B cell (primary cell): ENCODE measurements at regions of chr5 and their contacts with region 1.

Region 1: DNA sequence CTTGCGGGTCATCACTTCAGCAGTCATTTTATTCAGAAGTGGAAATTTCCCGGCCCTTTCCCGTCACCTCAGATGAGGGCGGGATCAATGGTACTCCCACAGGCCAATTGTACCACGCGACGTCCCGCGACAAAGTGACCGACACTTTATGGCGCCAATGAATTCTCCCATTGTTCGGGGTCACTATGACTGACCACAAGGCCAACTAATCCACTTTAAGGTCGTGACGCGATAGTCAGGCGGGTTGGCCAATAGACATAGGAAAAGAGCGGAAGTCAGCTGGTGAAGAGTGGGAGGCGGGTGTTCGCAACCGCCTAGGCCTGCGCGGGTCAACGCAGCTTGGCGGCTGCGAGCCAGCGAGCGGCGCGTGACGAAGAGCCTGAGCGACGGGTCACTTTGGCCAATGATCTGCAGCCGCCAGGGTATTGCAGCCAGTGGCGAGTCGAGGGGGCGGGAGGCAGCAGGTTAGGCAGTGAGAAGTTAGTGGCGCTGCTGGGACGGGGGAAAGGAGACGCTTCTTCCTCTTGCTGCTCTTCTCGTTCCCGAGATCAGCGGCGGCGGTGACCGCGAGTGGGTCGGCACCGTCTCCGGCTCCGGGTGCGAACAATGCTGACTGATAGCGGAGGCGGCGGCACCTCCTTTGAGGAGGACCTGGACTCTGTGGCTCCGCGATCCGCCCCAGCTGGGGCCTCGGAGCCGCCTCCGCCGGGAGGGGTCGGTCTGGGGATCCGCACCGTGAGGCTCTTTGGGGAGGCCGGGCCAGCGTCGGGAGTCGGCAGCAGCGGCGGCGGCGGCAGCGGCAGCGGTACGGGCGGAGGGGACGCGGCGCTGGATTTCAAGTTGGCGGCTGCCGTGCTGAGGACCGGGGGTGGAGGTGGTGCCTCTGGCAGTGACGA is at the start of gene ANKHD1:
- DNase-seq: peak; percentile 100
- ATAC-seq: peak; percentile 77
- H3K4me3 ChIP-seq: peak within 1 kb of the TSS; percentile 80 to 98 (median 92)
- H3K4me3 Mint-ChIP-seq: no peak within 1 kb of the TSS
- H3K27ac ChIP-seq: peak within 1 kb of the TSS; percentile 84 to 91
- H3K27ac Mint-ChIP-seq: no peak within 1 kb of the TSS
- H3K4me1 ChIP-seq: peaks cover 31% of the 10 kb centered on the region in 2 donors
- H3K4me1 Mint-ChIP-seq: peaks cover 31% of the 10 kb centered on the region
- H3K27me3 ChIP-seq: no peaks in the 10 kb centered on the region
- H3K27me3 Mint-ChIP-seq: no peaks in the 10 kb centered on the region
- CTCF ChIP-seq: no peak
- total RNA-seq, gene ANKHD1: 244 and 246 TPM in 2 replicates

Region 2: GRCh38 chr5:140174465-140175366 is 226.9 kb before region 1 on chr5 and contains the start of gene CYSTM1:
- CTCF ChIA-PET with region 1: no interaction called
- POLR2A ChIA-PET with region 1: interaction called, 5 read pairs
- intact Hi-C with region 1: loop called (anchors 1 kb)
- DNase-seq: peak; percentile 99
- ATAC-seq: peak; percentile 86
- H3K4me3 ChIP-seq: peak within 1 kb of the TSS; percentile 58 to 95 (median 94)
- H3K4me3 Mint-ChIP-seq: peak within 1 kb of the TSS; percentile 94
- H3K27ac ChIP-seq: peak within 1 kb of the TSS; percentile 84 to 98
- H3K27ac Mint-ChIP-seq: peak within 1 kb of the TSS; percentile 94
- H3K4me1 ChIP-seq: peaks cover 9 to 16% of the 10 kb centered on the region in 2 donors
- H3K4me1 Mint-ChIP-seq: peaks cover 15% of the 10 kb centered on the region
- H3K27me3 ChIP-seq: peaks cover 0 to 7% (median 0%) of the 10 kb centered on the region in 4 experiments
- H3K27me3 Mint-ChIP-seq: no peaks in the 10 kb centered on the region
- CTCF ChIP-seq: no peak
- total RNA-seq, gene CYSTM1: 17.0 and 18.7 TPM in 2 replicates

Region 3: DNA sequence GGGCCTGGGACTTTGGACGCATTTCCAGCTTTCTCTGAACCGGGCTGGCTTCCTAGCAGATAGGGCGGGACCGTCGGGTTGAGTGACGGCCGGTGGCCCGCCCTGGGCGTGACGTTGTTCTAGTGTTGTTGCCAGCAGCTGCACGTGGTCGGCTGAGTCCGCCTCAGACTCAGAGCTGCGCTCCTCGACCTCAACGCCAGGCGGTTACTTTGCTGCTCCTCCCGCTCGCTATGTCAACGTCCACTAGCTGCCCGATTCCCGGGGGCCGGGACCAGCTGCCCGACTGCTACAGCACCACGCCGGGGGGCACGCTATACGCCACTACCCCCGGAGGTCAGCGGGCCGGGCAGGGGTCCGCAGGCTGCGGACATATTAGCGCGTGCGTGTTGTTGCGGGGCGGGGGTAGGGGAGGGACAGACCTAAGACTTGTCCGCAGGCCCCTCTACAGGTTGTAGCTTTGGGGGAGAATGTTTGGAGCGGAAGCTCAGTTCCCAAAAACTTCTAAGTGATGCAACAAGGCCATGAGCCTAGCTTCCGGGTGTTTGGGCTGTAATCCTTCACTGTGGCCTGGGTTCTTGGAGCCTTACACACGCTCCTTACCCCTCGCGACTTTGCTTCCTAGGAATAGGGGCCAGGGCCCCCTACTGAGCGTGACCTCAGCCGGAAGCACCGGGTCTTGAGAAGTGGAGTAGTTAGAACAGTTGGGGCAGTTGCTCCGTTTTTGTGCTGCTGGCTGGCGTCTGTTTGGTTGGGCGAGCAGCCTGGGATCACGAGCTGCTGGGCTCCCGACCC is 146.1 kb after region 1 on chr5 and contains the start of gene EIF4EBP3:
- CTCF ChIA-PET with region 1: no interaction called
- POLR2A ChIA-PET with region 1: interaction called, 10 read pairs
- intact Hi-C with region 1: loop called (anchors 1 kb)
- DNase-seq: peak; percentile 91
- ATAC-seq: peak; percentile 97
- H3K4me3 ChIP-seq: peak within 1 kb of the TSS; percentile 35 to 93 (median 79)
- H3K4me3 Mint-ChIP-seq: peak within 1 kb of the TSS; percentile 94
- H3K27ac ChIP-seq: peak within 1 kb of the TSS; percentile 81 to 85
- H3K27ac Mint-ChIP-seq: peak within 1 kb of the TSS; percentile 94
- H3K4me1 ChIP-seq: peaks cover 10 to 30% of the 10 kb centered on the region in 2 donors
- H3K4me1 Mint-ChIP-seq: peaks cover 30% of the 10 kb centered on the region
- H3K27me3 ChIP-seq: no peaks in the 10 kb centered on the region
- H3K27me3 Mint-ChIP-seq: no peaks in the 10 kb centered on the region
- CTCF ChIP-seq: peak; percentile 77
- total RNA-seq, gene EIF4EBP3: 8.8 and 15.0 TPM in 2 replicates

Region 4: GRCh38 chr5:140639148-140639979 is 237.8 kb after region 1 on chr5 and contains the start of gene TMCO6:
- CTCF ChIA-PET with region 1: no interaction called
- POLR2A ChIA-PET with region 1: no interaction called
- intact Hi-C with region 1: loop called (anchors 1 kb)
- DNase-seq: peak; percentile 95
- ATAC-seq: peak; percentile 99
- H3K4me3 ChIP-seq: peak within 1 kb of the TSS; percentile 65 to 92 (median 89)
- H3K4me3 Mint-ChIP-seq: peak within 1 kb of the TSS; percentile 91
- H3K27ac ChIP-seq: peak within 1 kb of the TSS; percentile 66 to 89
- H3K27ac Mint-ChIP-seq: peak within 1 kb of the TSS; percentile 92
- H3K4me1 ChIP-seq: peaks cover 5 to 14% of the 10 kb centered on the region in 2 donors
- H3K4me1 Mint-ChIP-seq: peaks cover 24% of the 10 kb centered on the region
- H3K27me3 ChIP-seq: no peaks in the 10 kb centered on the region
- H3K27me3 Mint-ChIP-seq: no peaks in the 10 kb centered on the region
- CTCF ChIP-seq: peak; percentile 77
- total RNA-seq, gene TMCO6: 33.3 and 36.2 TPM in 2 replicates

Region 5: DNA sequence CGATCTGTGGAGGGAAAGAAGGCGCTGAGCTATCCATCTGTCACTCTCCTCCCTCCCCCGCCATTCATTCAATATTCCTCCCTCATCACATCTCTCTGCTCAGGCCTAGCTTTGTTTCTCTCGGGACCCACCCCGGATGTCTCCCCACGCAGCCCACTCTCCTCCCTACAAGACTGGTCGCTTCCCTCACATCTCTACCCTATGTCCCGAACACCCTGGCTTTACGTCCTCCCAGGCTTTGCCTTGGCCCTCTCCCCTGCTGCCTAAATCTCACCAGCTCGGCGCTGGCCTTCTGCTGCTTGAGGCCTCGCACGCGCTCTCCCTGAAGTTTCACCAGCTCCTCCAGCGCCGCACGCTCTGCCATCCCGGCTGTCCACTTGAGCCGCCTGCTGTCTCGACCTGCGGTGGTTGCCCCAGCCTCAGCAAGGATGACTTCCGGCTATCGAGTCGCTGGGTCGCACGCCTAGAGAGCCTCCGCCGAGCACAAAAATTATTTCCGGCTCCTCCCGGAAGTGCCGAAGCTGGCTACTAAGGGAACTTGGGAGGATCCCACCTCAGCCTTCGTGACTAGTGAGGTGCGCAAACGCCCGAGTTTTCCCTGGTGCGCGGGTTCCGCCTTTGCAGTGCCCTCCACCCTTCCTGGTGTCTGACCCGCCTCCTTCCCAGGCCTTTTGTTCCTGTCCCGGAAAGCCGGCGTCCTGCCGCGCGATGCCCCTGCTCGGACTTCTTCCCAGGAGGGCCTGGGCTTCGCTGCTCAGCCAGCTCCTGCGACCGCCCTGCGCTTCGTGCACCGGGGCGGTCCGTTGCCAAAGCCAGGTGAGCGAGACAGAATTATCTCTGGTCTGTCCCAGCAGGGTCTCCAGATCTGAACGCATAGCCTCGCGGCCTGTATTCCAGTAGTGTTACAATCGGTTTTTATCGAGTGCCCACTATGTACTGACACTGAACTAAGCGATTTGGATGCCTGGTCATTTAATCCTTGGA is 289.6 kb after region 1 on chr5 and contains the starts of genes HARS1 and HARS2:
- CTCF ChIA-PET with region 1: no interaction called
- POLR2A ChIA-PET with region 1: interaction called, 4 read pairs
- intact Hi-C with region 1: loop called (anchors 1 kb)
- DNase-seq: peak; percentile 87
- ATAC-seq: peak; percentile 97
- H3K4me3 ChIP-seq: peak within 1 kb of the TSS; percentile 89 to 98 (median 97)
- H3K4me3 Mint-ChIP-seq: peak within 1 kb of the TSS; percentile 99
- H3K27ac ChIP-seq: peak within 1 kb of the TSS; percentile 68 to 81
- H3K27ac Mint-ChIP-seq: peak within 1 kb of the TSS; percentile 94
- H3K4me1 ChIP-seq: peaks cover 14% of the 10 kb centered on the region in 2 donors
- H3K4me1 Mint-ChIP-seq: peaks cover 30% of the 10 kb centered on the region
- H3K27me3 ChIP-seq: no peaks in the 10 kb centered on the region
- H3K27me3 Mint-ChIP-seq: no peaks in the 10 kb centered on the region
- CTCF ChIP-seq: no peak
- total RNA-seq, gene HARS1: 60.5 and 65.6 TPM in 2 replicates
- total RNA-seq, gene HARS2: 65.1 and 68.0 TPM in 2 replicates

Region 6: DNA sequence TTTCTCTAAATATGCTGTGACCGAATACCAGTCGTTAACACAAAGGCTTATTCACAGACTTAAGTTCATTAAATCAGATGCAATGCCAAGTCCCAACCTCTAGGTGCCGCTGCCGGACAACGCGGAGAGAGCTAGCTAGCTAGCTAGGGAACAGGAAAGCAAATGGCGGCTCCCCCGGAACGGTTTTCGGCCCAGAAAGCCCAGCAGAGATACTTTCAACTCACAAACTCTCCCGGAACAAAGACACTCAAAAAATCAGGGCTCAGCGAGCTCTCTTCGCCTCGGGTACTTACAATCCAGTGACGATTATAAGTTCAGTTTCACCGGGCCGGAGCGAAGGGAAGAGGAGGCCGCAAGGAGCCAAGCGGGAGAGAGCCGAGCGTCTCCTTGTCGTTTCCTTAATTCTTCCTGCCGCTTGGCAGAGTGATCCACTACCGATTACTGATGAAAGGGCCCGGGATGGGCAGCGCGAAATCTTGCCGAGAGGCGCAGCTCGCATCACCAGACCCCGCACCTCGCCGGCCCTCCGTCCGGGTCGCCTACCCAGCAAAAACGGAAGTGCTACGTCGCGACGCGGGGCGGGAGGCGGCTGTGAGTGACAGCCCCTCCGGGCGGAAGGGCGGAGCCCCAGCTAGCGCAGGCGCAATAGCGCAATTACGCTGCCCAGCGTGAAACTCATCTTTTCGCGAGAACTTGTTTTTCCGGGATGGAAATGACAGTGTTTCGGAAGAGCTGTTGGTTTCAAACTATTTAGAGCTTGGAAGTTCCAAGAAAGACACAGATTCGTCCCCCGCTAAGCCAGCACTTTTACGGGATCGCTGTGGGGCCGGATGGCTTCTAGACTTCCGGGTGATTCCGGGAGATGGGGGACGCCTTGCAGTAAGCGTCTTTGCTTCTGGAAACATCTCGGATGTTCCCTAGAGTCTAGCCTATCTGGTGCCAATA is 918.9 kb after region 1 on chr5 and contains the start of gene TAF7:
- CTCF ChIA-PET with region 1: no interaction called
- POLR2A ChIA-PET with region 1: interaction called, 3 read pairs
- intact Hi-C with region 1: loop called (anchors 5 kb)
- DNase-seq: peak; percentile 96
- ATAC-seq: peak; percentile 90
- H3K4me3 ChIP-seq: peak within 1 kb of the TSS; percentile 78 to 100 (median 97)
- H3K4me3 Mint-ChIP-seq: peak within 1 kb of the TSS; percentile 96
- H3K27ac ChIP-seq: peak within 1 kb of the TSS; percentile 95 to 96
- H3K27ac Mint-ChIP-seq: peak within 1 kb of the TSS; percentile 98
- H3K4me1 ChIP-seq: peaks cover 17 to 20% of the 10 kb centered on the region in 2 donors
- H3K4me1 Mint-ChIP-seq: peaks cover 28% of the 10 kb centered on the region
- H3K27me3 ChIP-seq: no peaks in the 10 kb centered on the region
- H3K27me3 Mint-ChIP-seq: no peaks in the 10 kb centered on the region
- CTCF ChIP-seq: peak; percentile 89
- total RNA-seq, gene TAF7: 119 TPM in 2 replicates